ENCODE measurements at regions of chr1 and their contacts with region 1.

Region 1: GRCh38 chr1:151008190-151008860 is at the start of gene PRUNE1:
- DNase-seq: peak; percentile 92 to 99 (median 96)
- H3K4me3 ChIP-seq: peak within 1 kb of the TSS; percentile 74 to 92
- H3K4me3 Mint-ChIP-seq: peak within 1 kb of the TSS; percentile 88 to 99 (median 95)
- H3K27ac ChIP-seq: peak within 1 kb of the TSS; percentile 88
- H3K27ac Mint-ChIP-seq: peak within 1 kb of the TSS; percentile 90 to 100 (median 99)
- H3K4me1 ChIP-seq: peaks cover 67% of the 10 kb centered on the region
- H3K4me1 Mint-ChIP-seq: peaks cover 47 to 93% (median 69%) of the 10 kb centered on the region in 4 donors
- H3K27me3 ChIP-seq: no peaks in the 10 kb centered on the region
- H3K27me3 Mint-ChIP-seq: no peaks in the 10 kb centered on the region
- total RNA-seq, gene PRUNE1: 35.0 to 38.9 TPM

Region 2: DNA sequence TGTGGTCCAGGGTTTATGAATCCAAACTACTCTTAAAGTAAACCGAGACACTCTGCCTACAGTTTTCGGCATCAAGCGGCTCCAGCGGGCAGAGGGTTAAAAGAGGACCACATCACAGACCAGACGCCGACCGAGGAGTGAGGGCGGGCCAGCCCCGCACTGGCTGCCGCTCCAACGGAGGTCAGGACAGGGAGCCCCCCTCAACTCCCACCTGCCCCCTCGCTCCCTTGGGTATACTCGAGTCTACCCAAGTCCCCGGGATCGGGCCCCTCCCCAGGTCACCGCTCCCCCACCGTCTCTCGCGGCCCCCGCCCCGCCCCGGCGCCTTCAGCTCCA is 132.2 kb before region 1 on chr1:
- CTCF ChIA-PET with region 1: no interaction called
- POLR2A ChIA-PET with region 1: no interaction called
- intact Hi-C with region 1: loop called (anchors 5 kb)
- DNase-seq: no peak
- H3K4me3 ChIP-seq: peak overlapping the region; percentile 60 to 93
- H3K4me3 Mint-ChIP-seq: peak overlapping the region; percentile 88 to 97 (median 95)
- H3K27ac ChIP-seq: peak overlapping the region; percentile 81
- H3K27ac Mint-ChIP-seq: peak overlapping the region; percentile 88 to 97 (median 95)
- H3K4me1 ChIP-seq: peaks cover 25% of the 10 kb centered on the region
- H3K4me1 Mint-ChIP-seq: peaks cover 23 to 47% (median 35%) of the 10 kb centered on the region in 4 donors
- H3K27me3 ChIP-seq: no peaks in the 10 kb centered on the region
- H3K27me3 Mint-ChIP-seq: no peaks in the 10 kb centered on the region

Region 3: DNA sequence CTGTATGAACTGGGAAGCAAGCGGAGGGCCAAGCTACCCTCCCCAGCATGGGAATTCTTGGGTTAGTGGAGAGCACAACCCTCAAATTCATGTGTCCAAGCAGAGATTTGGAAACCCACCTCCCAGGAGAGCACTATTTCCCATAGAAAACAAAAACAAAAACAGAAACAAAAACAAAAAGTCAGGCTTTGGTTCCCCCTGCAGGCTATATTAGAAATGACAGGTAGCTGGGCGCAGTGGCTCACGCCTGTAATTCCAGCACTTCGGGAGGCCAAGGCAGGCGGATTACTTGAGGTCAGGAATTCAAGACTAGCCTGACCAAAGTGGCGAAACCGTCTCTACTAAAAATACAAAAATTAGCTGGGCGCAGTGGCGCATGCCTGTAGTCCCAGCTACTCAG is 12.4 kb before region 1 on chr1:
- CTCF ChIA-PET with region 1: interaction called, 47 read pairs
- POLR2A ChIA-PET with region 1: interaction called, 16 read pairs
- intact Hi-C with region 1: loop called (anchors 1 kb)
- DNase-seq: peak in 3 of 5 donors; percentile 32 to 39 (median 38)
- H3K4me3 ChIP-seq: no peak overlapping the region
- H3K4me3 Mint-ChIP-seq: peak overlapping the region in 3 of 8 donors; percentile 10 to 57 (median 25)
- H3K27ac ChIP-seq: peak overlapping the region; percentile 10
- H3K27ac Mint-ChIP-seq: peak overlapping the region in 6 of 7 donors; percentile 70 to 89 (median 80)
- H3K4me1 ChIP-seq: peaks cover 12% of the 10 kb centered on the region
- H3K4me1 Mint-ChIP-seq: peaks cover 3 to 20% (median 13%) of the 10 kb centered on the region in 4 donors
- H3K27me3 ChIP-seq: no peaks in the 10 kb centered on the region
- H3K27me3 Mint-ChIP-seq: no peaks in the 10 kb centered on the region

Region 4: GRCh38 chr1:151035167-151035566 is 26.8 kb after region 1 on chr1:
- CTCF ChIA-PET with region 1: no interaction called
- POLR2A ChIA-PET with region 1: no interaction called
- intact Hi-C with region 1: no loop called
- DNase-seq: no peak
- H3K4me3 ChIP-seq: no peak overlapping the region
- H3K4me3 Mint-ChIP-seq: no peak overlapping the region
- H3K27ac ChIP-seq: no peak overlapping the region
- H3K27ac Mint-ChIP-seq: peak overlapping the region in 5 of 7 donors; percentile 19 to 86 (median 66)
- H3K4me1 ChIP-seq: no peaks in the 10 kb centered on the region
- H3K4me1 Mint-ChIP-seq: peaks cover 0 to 8% (median 6%) of the 10 kb centered on the region in 4 donors
- H3K27me3 ChIP-seq: no peaks in the 10 kb centered on the region
- H3K27me3 Mint-ChIP-seq: no peaks in the 10 kb centered on the region

Region 5: GRCh38 chr1:151047925-151048645 is 39.8 kb after region 1 on chr1:
- CTCF ChIA-PET with region 1: interaction called, 6 read pairs
- POLR2A ChIA-PET with region 1: interaction called, 28 read pairs
- intact Hi-C with region 1: loop called (anchors 2 kb)
- DNase-seq: peak; percentile 59 to 72 (median 64)
- H3K4me3 ChIP-seq: peak overlapping the region; percentile 59 to 74
- H3K4me3 Mint-ChIP-seq: peak overlapping the region; percentile 86 to 95 (median 90)
- H3K27ac ChIP-seq: peak overlapping the region; percentile 74
- H3K27ac Mint-ChIP-seq: peak overlapping the region; percentile 88 to 98 (median 93)
- H3K4me1 ChIP-seq: peaks cover 38% of the 10 kb centered on the region
- H3K4me1 Mint-ChIP-seq: peaks cover 35 to 81% (median 61%) of the 10 kb centered on the region in 4 donors
- H3K27me3 ChIP-seq: no peaks in the 10 kb centered on the region
- H3K27me3 Mint-ChIP-seq: no peaks in the 10 kb centered on the region

Region 6: GRCh38 chr1:151070474-151071276 is 62.4 kb after region 1 on chr1 and contains the start of gene GABPB2:
- CTCF ChIA-PET with region 1: interaction called, 4 read pairs
- POLR2A ChIA-PET with region 1: interaction called, 7 read pairs
- intact Hi-C with region 1: loop called (anchors 1 kb)
- DNase-seq: peak; percentile 87 to 96 (median 88)
- H3K4me3 ChIP-seq: peak within 1 kb of the TSS; percentile 57 to 96
- H3K4me3 Mint-ChIP-seq: peak within 1 kb of the TSS; percentile 95 to 100 (median 99)
- H3K27ac ChIP-seq: peak within 1 kb of the TSS; percentile 97
- H3K27ac Mint-ChIP-seq: peak within 1 kb of the TSS; percentile 97 to 100 (median 100)
- H3K4me1 ChIP-seq: peaks cover 17% of the 10 kb centered on the region
- H3K4me1 Mint-ChIP-seq: peaks cover 13 to 34% (median 23%) of the 10 kb centered on the region in 4 donors
- H3K27me3 ChIP-seq: no peaks in the 10 kb centered on the region
- H3K27me3 Mint-ChIP-seq: no peaks in the 10 kb centered on the region
- total RNA-seq, gene GABPB2: 36.8 to 42.8 TPM

Region 7: DNA sequence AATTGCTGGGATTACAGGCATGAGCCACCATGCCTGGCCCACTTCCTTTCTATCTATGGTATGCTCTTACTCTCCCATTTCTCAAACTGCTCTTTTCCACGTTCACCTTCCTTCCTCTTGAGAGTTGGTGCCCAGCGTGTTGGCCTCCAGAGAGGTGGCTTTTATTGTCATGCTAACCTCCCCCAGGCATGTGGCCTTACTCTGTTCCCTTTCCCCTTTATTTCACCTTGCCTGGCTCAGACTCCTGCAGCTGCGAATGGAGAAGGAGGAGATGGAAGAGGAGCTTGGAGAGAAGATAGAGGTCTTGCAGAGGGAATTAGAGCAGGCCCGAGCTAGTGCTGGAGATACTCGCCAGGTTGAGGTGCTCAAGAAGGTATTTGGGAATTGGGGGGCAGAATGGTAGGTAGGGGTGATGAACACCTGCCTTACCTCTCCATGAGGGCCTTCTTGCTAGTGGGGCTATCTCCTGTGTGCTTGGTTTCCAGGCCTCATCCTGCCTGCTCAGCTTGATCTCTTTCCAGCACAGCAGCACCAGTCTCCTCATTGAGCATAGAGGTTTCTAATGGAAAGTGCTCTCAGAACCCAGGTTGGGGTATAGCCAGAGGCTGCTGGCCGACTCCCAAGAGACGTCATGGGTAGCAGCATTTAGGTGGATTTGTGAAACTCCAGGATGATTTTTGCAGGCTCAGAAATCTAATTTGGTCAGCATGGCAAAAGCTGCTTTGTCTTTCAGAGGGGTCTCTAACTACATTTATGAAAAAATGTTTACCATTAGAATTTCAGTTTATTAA is 518.6 kb after region 1 on chr1:
- CTCF ChIA-PET with region 1: no interaction called
- POLR2A ChIA-PET with region 1: no interaction called
- intact Hi-C with region 1: no loop called
- DNase-seq: no peak
- H3K4me3 ChIP-seq: no peak overlapping the region
- H3K4me3 Mint-ChIP-seq: no peak overlapping the region
- H3K27ac ChIP-seq: no peak overlapping the region
- H3K27ac Mint-ChIP-seq: peak overlapping the region in 1 of 7 donors; percentile 41
- H3K4me1 ChIP-seq: no peaks in the 10 kb centered on the region
- H3K4me1 Mint-ChIP-seq: no peaks in the 10 kb centered on the region
- H3K27me3 ChIP-seq: no peaks in the 10 kb centered on the region
- H3K27me3 Mint-ChIP-seq: peaks cover 0 to 3% of the 10 kb centered on the region in 2 donors

Measured in CD4-positive, alpha-beta memory T cell (primary cell).